Activated CD8-positive, alpha-beta T cell treated with anti-CD3 and anti-CD28 coated beads for 36 hours (primary cell): ENCODE measurements at regions of chr2 and their contacts with region 1.

Region 1: DNA sequence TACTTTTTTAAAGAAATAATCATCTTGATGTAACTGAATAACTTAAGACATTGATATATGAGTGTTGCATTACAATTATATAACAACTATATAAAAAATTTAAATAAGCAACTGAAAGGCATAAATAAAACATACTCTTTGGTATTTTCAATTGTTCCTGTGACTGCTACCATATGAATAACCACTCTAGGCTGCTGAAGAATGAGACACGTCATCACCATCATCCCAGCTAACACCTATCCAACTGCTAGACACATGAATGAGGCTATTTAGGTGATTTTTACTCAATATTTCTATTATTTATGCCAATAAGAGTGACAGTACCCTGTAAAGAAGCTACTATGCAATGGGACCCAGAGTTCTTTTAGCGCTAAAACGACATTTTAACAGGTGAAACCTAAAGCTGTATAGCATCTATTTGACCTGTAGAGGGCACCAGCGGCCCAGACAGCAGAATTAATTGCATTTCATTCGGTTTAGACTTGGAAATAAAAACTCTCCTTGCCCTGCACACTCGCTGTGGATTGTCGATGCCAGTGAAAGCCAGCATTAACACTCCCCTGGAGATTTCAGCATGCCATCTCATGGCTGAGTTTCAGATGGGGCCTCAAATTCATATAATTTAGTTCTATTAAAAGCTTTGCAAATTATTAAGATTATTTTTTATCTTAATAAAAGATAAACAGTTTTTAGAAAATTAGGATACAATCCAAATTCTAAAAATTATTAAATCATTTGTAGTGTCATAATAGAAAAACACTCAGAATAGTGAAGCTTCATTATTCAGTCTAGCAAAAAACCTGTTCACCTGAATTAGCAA is 89.4 kb upstream of the MAP2 start:
- DNase-seq: peak; percentile 60
- ATAC-seq: peak; percentile 39
- H3K4me3 Mint-ChIP-seq: no peak overlapping the region
- H3K27ac Mint-ChIP-seq: no peak overlapping the region
- H3K4me1 Mint-ChIP-seq: no peaks in the 10 kb centered on the region
- H3K27me3 Mint-ChIP-seq: no peaks in the 10 kb centered on the region
- CTCF ChIP-seq: peak; percentile 69

Region 2: GRCh38 chr2:209230560-209230959 is 103.8 kb before region 1 on chr2:
- CTCF ChIA-PET with region 1: no interaction called
- POLR2A ChIA-PET with region 1: no interaction called
- intact Hi-C with region 1: no loop called
- DNase-seq: no peak
- ATAC-seq: no peak
- H3K4me3 Mint-ChIP-seq: no peak overlapping the region
- H3K27ac Mint-ChIP-seq: no peak overlapping the region
- H3K4me1 Mint-ChIP-seq: no peaks in the 10 kb centered on the region
- H3K27me3 Mint-ChIP-seq: no peaks in the 10 kb centered on the region
- CTCF ChIP-seq: no peak

Region 3: DNA sequence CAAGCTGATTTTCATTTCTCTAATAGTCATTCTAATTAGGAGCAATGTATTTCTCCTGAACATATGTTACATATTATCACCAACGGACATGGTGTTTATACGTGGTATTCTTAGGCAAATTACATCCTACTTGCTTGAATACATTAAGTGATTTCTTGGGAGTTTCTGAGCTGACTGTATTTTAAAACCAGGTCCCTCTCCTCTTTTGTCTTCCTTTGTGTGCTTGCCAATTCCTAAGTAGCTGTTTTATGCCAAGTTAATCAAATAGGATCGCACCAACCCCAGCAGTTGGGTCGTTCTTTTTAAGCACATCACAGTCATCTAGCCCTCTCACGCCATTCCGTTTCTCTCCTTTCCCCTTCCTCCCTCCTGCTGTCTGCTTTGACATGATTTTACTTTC is 14.0 kb after region 1 on chr2:
- CTCF ChIA-PET with region 1: interaction called, 22 read pairs
- POLR2A ChIA-PET with region 1: no interaction called
- intact Hi-C with region 1: no loop called
- DNase-seq: no peak
- ATAC-seq: no peak
- H3K4me3 Mint-ChIP-seq: no peak overlapping the region
- H3K27ac Mint-ChIP-seq: no peak overlapping the region
- H3K4me1 Mint-ChIP-seq: no peaks in the 10 kb centered on the region
- H3K27me3 Mint-ChIP-seq: no peaks in the 10 kb centered on the region
- CTCF ChIP-seq: no peak

Region 4: GRCh38 chr2:209423562-209424198 is 89.3 kb after region 1 on chr2 and contains the start of gene MAP2:
- CTCF ChIA-PET with region 1: no interaction called
- POLR2A ChIA-PET with region 1: no interaction called
- intact Hi-C with region 1: loop called (anchors 10 kb)
- DNase-seq: peak; percentile 66
- ATAC-seq: peak; percentile 98
- H3K4me3 Mint-ChIP-seq: peak within 1 kb of the TSS; percentile 46
- H3K27ac Mint-ChIP-seq: no peak within 1 kb of the TSS
- H3K4me1 Mint-ChIP-seq: peaks cover 10% of the 10 kb centered on the region
- H3K27me3 Mint-ChIP-seq: peaks cover 21% of the 10 kb centered on the region
- CTCF ChIP-seq: peak; percentile 66
- total RNA-seq, gene MAP2: not detected

Region 5: DNA sequence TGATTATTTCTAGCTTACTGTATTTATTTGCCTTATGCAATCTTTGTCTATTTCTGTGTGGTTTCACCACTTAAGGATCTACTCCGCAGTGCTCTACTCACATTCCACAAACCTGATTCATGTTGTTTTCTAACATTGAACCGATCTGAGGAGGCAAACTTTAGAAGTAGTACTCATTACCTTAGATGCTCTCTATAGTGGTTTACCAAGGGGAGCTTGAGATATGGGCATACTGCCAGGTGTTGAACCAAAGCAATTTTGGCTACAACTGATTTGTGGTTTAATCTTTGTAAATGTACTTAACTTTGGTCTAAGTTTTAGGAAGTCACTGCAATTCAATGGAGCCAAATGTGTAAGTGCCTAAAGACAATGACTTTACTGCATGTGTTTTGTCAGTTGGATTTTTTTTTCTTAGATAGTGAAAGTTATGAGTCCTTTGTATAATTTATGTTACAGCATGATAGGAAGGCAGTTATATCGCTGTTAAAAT is 139.6 kb after region 1 on chr2:
- CTCF ChIA-PET with region 1: no interaction called
- POLR2A ChIA-PET with region 1: no interaction called
- intact Hi-C with region 1: no loop called
- DNase-seq: no peak
- ATAC-seq: no peak
- H3K4me3 Mint-ChIP-seq: no peak overlapping the region
- H3K27ac Mint-ChIP-seq: no peak overlapping the region
- H3K4me1 Mint-ChIP-seq: no peaks in the 10 kb centered on the region
- H3K27me3 Mint-ChIP-seq: no peaks in the 10 kb centered on the region
- CTCF ChIP-seq: no peak

Region 6: DNA sequence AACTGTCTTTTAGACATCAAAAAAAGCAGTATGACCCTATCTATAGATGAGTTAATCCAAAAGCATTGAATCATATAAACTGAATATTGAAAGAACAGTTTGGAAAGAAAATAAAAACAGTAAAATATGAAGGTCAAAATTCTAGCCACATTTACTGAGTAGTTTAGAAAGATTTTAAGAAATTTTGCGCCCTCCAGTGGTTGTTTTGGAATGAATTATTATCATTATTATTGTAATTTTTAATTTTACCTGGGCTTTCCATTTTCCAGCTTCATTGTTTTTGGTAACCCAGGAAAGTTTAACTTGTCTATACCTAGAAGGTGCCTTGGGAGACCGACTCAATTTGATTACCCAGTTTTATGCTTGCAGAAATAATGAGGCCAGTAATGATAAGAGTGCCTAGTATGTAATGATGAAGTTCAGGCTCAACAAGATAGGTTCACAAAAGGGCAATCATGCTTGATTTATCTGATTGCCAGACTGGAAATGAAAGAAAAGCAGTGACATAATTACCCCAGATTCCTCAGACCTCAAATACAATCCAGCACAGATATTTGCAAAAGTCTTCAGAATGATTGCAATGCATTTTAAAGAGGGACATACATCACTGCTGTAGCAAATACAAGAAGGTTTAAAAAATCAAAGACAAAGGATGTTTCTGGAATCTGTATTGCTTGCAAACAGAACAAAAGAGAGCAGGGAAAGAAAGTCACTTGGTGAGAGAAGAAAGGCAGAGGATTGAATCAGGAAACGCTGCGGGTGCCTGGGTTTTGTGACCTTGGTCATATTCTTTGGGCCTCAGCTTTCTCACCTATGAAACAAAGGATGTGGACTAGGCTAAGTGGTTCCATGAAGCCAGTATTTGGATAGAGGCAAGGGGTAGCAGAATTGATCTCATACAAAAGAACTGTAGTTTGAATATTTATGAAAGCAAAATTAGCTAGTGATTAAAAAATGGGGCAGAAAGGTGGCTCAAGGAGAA is 243.3 kb after region 1 on chr2:
- CTCF ChIA-PET with region 1: interaction called, 24 read pairs
- POLR2A ChIA-PET with region 1: no interaction called
- intact Hi-C with region 1: loop called (anchors 5 kb)
- DNase-seq: no peak
- ATAC-seq: no peak
- H3K4me3 Mint-ChIP-seq: no peak overlapping the region
- H3K27ac Mint-ChIP-seq: no peak overlapping the region
- H3K4me1 Mint-ChIP-seq: no peaks in the 10 kb centered on the region
- H3K27me3 Mint-ChIP-seq: peaks cover 1% of the 10 kb centered on the region
- CTCF ChIP-seq: peak; percentile 46